Activated CD4-positive, alpha-beta memory T cell treated with anti-CD3 and anti-CD28 coated beads for 36 hours (primary cell): ENCODE measurements at regions of chr7 and their contacts with region 1.

Region 1: GRCh38 chr7:5665094-5666025 is 116.1 kb downstream of the RNF216 start:
- DNase-seq: peak; percentile 73
- H3K4me3 Mint-ChIP-seq: no peak overlapping the region
- H3K27ac Mint-ChIP-seq: peak overlapping the region; percentile 49
- H3K4me1 Mint-ChIP-seq: peaks cover 17% of the 10 kb centered on the region
- H3K27me3 Mint-ChIP-seq: no peaks in the 10 kb centered on the region

Region 2: GRCh38 chr7:5484921-5485320 is 180.4 kb before region 1 on chr7:
- CTCF ChIA-PET with region 1: no interaction called
- POLR2A ChIA-PET with region 1: no interaction called
- intact Hi-C with region 1: no loop called
- DNase-seq: no peak
- H3K4me3 Mint-ChIP-seq: no peak overlapping the region
- H3K27ac Mint-ChIP-seq: no peak overlapping the region
- H3K4me1 Mint-ChIP-seq: peaks cover 17% of the 10 kb centered on the region
- H3K27me3 Mint-ChIP-seq: no peaks in the 10 kb centered on the region

Region 3: GRCh38 chr7:5549096-5549763 is 116.1 kb before region 1 on chr7:
- CTCF ChIA-PET with region 1: no interaction called
- POLR2A ChIA-PET with region 1: no interaction called
- intact Hi-C with region 1: no loop called
- DNase-seq: peak; percentile 48
- H3K4me3 Mint-ChIP-seq: no peak overlapping the region
- H3K27ac Mint-ChIP-seq: peak overlapping the region; percentile 42
- H3K4me1 Mint-ChIP-seq: peaks cover 7% of the 10 kb centered on the region
- H3K27me3 Mint-ChIP-seq: no peaks in the 10 kb centered on the region

Region 4: DNA sequence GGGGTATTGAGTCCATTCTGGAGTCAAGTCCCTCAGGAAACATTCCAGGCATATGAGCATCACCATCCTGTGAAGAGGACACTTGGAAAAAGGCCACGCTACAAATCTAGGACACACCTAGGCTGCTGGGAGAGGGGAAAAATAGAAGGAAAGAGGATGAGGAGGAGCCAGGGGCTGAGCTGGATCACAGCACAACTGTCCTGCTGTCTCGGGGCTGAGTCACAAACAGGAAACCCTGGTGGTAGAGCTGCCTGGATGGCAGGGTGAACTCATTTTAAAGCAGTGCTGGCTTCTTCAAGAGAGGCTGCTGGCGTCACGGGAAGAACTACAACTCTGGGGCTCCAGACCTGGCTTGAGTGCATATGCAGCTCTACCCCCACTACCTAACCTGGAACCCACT is 35.4 kb before region 1 on chr7:
- CTCF ChIA-PET with region 1: interaction called, 10 read pairs
- POLR2A ChIA-PET with region 1: interaction called, 3 read pairs
- intact Hi-C with region 1: loop called (anchors 5 kb)
- DNase-seq: peak; percentile 72
- H3K4me3 Mint-ChIP-seq: no peak overlapping the region
- H3K27ac Mint-ChIP-seq: peak overlapping the region; percentile 76
- H3K4me1 Mint-ChIP-seq: peaks cover 31% of the 10 kb centered on the region
- H3K27me3 Mint-ChIP-seq: no peaks in the 10 kb centered on the region

Region 5: GRCh38 chr7:5677538-5678294 is 12.4 kb after region 1 on chr7:
- CTCF ChIA-PET with region 1: interaction called, 35 read pairs
- POLR2A ChIA-PET with region 1: no interaction called
- intact Hi-C with region 1: no loop called
- DNase-seq: peak; percentile 70
- H3K4me3 Mint-ChIP-seq: no peak overlapping the region
- H3K27ac Mint-ChIP-seq: peak overlapping the region; percentile 20
- H3K4me1 Mint-ChIP-seq: peaks cover 42% of the 10 kb centered on the region
- H3K27me3 Mint-ChIP-seq: no peaks in the 10 kb centered on the region

Region 6: GRCh38 chr7:5694912-5695726 is 29.8 kb after region 1 on chr7:
- CTCF ChIA-PET with region 1: interaction called, 31 read pairs
- POLR2A ChIA-PET with region 1: no interaction called
- intact Hi-C with region 1: no loop called
- DNase-seq: peak; percentile 87
- H3K4me3 Mint-ChIP-seq: peak overlapping the region; percentile 80
- H3K27ac Mint-ChIP-seq: peak overlapping the region; percentile 90
- H3K4me1 Mint-ChIP-seq: peaks cover 98% of the 10 kb centered on the region
- H3K27me3 Mint-ChIP-seq: no peaks in the 10 kb centered on the region

Region 7: DNA sequence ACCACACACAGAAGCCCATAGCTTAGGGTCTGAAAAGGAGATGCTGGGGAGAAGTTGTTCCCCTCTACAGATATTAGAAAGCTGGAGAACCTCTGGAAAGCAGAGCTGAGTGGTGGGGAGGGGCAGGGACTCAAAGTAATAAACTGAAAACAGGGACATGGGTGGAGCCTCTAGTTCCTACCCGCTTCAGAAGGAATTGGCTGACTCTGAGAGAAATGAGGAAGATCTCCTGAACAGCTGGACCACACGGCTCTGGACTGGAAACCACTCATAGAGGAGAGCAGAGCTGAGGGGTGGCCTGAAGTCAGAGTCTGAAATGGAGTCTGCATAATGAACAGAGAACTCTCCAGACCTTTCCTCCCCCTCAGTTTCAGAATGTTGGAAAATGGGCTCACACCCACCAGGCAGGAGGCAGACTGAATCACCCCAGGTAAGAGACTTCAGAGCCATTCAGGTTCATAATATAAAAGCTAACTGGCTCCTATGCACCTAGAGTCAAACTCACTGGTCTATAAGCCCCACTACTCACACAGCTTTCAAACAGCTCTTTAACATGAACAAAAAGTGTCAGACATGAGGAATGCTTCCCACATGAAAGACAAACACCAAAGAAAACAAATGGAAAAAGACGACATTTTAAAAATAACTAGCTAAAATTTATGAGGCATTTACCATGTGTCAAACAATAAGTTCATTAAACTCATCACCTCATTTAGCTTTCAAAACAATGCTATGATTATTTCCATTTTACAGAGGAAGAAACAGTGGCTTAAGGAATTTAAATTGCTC is 48.0 kb after region 1 on chr7:
- CTCF ChIA-PET with region 1: interaction called, 11 read pairs
- POLR2A ChIA-PET with region 1: no interaction called
- intact Hi-C with region 1: no loop called
- DNase-seq: no peak
- H3K4me3 Mint-ChIP-seq: no peak overlapping the region
- H3K27ac Mint-ChIP-seq: no peak overlapping the region
- H3K4me1 Mint-ChIP-seq: peaks cover 7% of the 10 kb centered on the region
- H3K27me3 Mint-ChIP-seq: no peaks in the 10 kb centered on the region

Region 8: DNA sequence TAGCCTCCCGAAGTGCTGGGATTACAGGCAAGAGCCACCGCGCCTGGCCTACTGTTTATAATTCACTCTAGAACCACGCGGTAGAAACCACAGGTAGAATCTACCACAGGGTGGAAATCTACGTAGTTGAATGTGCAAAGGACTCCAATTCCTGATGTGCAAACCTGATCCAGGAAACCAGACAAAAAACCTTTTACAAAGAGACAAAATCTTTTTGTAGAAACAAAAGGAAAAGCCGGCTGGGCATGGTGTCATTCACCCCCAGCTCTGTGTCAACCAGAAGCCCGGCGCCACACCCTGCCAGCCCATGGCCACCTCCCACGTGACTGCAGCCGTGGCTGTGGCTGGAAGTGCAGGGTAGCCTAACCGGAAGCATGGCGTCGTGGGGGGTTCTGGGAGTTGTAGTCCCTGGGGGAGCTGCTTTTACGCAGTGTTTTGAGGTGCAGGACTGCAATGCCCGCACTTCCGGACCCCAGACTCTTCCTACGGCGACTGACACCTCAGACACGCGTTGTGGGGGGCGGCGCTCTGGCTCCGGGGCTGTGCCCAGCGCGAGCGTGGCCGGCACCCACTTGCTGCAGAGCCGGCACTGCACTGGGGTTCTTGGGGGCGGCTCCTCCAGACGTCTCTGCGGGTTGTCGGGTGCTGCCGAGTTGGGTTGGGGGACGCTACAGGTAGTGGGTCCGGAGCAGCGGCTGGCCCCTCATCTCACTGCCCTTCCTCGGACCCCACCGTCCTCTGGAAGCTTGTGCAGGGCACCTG is 157.6 kb after region 1 on chr7:
- CTCF ChIA-PET with region 1: no interaction called
- POLR2A ChIA-PET with region 1: no interaction called
- intact Hi-C with region 1: no loop called
- DNase-seq: peak; percentile 98
- H3K4me3 Mint-ChIP-seq: peak overlapping the region; percentile 74
- H3K27ac Mint-ChIP-seq: peak overlapping the region; percentile 76
- H3K4me1 Mint-ChIP-seq: peaks cover 27% of the 10 kb centered on the region
- H3K27me3 Mint-ChIP-seq: no peaks in the 10 kb centered on the region